Activated T-helper 1 cell treated with anti-CD3 and anti-CD28 coated beads, Interleukin-12 subunit alpha, Interleukin-12 subunit beta, Interleukin-2, Interleukin-4 antibody, amounts not matched to agents 30 ng/mL and 10 ng/mL and 1 ng/mL, durations not matched to agents 14 hours and 24 hours and 36 hours (primary cell): ENCODE measurements at regions of chr2 and their contacts with region 1.

Region 1: GRCh38 chr2:101473911-101474701 is 806 bp downstream of the RFX8 start:
- DNase-seq: peak; percentile 52
- H3K4me3 Mint-ChIP-seq: peak overlapping the region; percentile 84
- H3K27ac Mint-ChIP-seq: peak overlapping the region; percentile 86
- H3K4me1 Mint-ChIP-seq: peaks cover 62% of the 10 kb centered on the region
- H3K27me3 Mint-ChIP-seq: no peaks in the 10 kb centered on the region

Region 2: GRCh38 chr2:101012706-101013181 is 461.4 kb before region 1 on chr2:
- intact Hi-C with region 1: loop called (anchors 10 kb)
- DNase-seq: peak; percentile 19
- H3K4me3 Mint-ChIP-seq: no peak overlapping the region
- H3K27ac Mint-ChIP-seq: peak overlapping the region; percentile 41
- H3K4me1 Mint-ChIP-seq: peaks cover 36% of the 10 kb centered on the region
- H3K27me3 Mint-ChIP-seq: no peaks in the 10 kb centered on the region

Region 3: GRCh38 chr2:101501443-101501842 is 27.3 kb after region 1 on chr2:
- intact Hi-C with region 1: loop called (anchors 2 kb)
- DNase-seq: no peak
- H3K4me3 Mint-ChIP-seq: no peak overlapping the region
- H3K27ac Mint-ChIP-seq: peak overlapping the region; percentile 14
- H3K4me1 Mint-ChIP-seq: peaks cover 22% of the 10 kb centered on the region
- H3K27me3 Mint-ChIP-seq: no peaks in the 10 kb centered on the region

Region 4: GRCh38 chr2:101569886-101570520 is 95.9 kb after region 1 on chr2:
- intact Hi-C with region 1: loop called (anchors 2 kb)
- DNase-seq: no peak
- H3K4me3 Mint-ChIP-seq: no peak overlapping the region
- H3K27ac Mint-ChIP-seq: peak overlapping the region; percentile 91
- H3K4me1 Mint-ChIP-seq: peaks cover 47% of the 10 kb centered on the region
- H3K27me3 Mint-ChIP-seq: peaks cover 8% of the 10 kb centered on the region

Region 5: DNA sequence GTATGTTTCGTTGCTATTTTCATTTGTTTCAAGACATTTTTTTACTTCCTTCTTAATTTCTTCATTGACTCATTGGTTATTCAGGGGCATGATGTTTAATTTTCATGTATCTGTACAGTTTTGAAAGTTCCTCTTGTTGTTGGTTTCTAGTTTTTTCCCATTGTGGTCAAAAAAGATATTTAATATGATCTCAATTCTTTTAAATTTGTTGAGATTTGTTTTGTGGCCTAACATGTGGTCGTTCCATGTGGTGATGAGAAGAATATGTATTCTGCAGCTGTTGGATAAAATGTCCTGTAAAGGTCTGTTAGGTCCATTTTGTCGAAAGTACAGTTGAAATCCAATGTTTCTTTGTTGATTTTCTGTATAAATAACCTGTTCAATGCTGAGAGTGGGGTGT is 113.1 kb after region 1 on chr2:
- intact Hi-C with region 1: no loop called
- DNase-seq: no peak
- H3K4me3 Mint-ChIP-seq: no peak overlapping the region
- H3K27ac Mint-ChIP-seq: no peak overlapping the region
- H3K4me1 Mint-ChIP-seq: no peaks in the 10 kb centered on the region
- H3K27me3 Mint-ChIP-seq: peaks cover 7% of the 10 kb centered on the region

Region 6: GRCh38 chr2:101597351-101597944 is 123.3 kb after region 1 on chr2:
- intact Hi-C with region 1: no loop called
- DNase-seq: no peak
- H3K4me3 Mint-ChIP-seq: no peak overlapping the region
- H3K27ac Mint-ChIP-seq: no peak overlapping the region
- H3K4me1 Mint-ChIP-seq: peaks cover 6% of the 10 kb centered on the region
- H3K27me3 Mint-ChIP-seq: peaks cover 4% of the 10 kb centered on the region

Region 7: DNA sequence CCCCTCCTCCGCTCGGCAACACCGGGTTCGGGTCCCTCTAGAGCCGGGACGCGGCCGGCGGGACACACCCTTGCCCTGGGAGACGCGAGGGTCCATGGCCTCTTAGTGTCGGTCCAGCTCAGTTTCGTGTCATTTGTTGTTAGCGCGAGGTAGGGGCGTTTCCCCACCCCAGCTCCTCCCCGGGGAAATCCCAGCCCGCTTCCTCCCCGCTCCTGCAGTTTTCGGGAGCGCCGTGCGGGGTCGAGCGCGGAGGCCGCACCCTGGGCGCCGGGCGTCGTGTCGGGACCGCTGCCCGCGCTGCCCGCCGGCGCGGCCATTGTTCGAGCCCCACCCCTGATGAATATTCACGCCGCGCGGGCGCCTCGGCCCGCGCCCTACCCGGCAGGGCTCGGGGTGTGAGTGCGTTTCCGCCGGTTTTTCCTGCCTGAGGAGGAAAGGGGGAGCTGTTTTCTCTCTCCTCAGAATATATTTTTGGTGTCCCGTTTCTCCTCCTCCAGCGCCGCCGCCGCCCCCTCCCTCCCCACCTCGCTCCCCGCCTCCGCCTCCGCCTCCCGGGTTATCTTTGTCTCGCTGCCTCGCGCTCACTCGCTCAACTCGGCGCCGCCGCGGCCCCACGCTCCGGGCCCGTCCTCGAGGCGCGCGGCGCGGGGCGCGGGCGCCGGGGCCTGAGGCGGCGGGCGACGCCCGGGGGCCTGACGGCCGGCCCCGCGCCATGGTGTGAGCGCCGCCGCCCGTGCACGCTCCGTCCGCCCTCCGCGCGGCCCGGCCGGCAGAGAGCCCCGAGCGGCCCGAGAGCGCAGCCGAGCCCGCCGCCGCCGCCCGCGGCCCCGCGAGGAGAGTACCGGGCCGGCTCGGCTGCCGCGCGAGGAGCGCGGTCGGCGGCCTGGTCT is 223.3 kb after region 1 on chr2 and contains the start of gene MAP4K4:
- intact Hi-C with region 1: loop called (anchors 2 kb)
- DNase-seq: peak; percentile 69
- H3K4me3 Mint-ChIP-seq: peak within 1 kb of the TSS; percentile 88
- H3K27ac Mint-ChIP-seq: peak within 1 kb of the TSS; percentile 88
- H3K4me1 Mint-ChIP-seq: peaks cover 24% of the 10 kb centered on the region
- H3K27me3 Mint-ChIP-seq: no peaks in the 10 kb centered on the region
- total RNA-seq, gene MAP4K4: 54.3 and 54.5 TPM in 2 replicates

Region 8: DNA sequence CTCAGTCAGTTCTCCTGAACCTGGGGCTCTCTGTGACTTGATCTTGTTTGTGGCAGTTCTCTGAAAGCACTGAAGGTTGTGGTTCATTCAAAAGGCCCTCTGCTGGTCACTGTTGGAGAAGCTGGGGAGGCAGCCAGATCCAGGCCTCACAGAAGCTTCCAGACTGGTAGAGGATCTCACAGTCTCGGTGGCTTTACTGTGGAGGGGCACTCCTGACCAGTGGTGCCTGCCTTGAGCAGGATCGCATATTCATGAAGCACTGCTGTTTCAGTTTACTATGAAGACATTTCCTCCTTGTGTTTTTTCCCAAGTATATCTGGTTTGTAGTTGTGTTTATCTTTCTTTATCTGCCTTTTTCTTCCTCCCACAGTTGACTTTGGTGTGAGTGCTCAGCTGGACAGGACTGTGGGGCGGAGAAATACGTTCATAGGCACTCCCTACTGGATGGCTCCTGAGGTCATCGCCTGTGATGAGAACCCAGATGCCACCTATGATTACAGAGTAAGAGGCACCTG is 357.3 kb after region 1 on chr2:
- intact Hi-C with region 1: loop called (anchors 2 kb)
- DNase-seq: peak; percentile 46
- H3K4me3 Mint-ChIP-seq: peak overlapping the region; percentile 32
- H3K27ac Mint-ChIP-seq: peak overlapping the region; percentile 92
- H3K4me1 Mint-ChIP-seq: peaks cover 54% of the 10 kb centered on the region
- H3K27me3 Mint-ChIP-seq: no peaks in the 10 kb centered on the region

Region 9: GRCh38 chr2:101900375-101900774 is 426.3 kb after region 1 on chr2:
- intact Hi-C with region 1: no loop called
- DNase-seq: peak; percentile 9
- H3K4me3 Mint-ChIP-seq: peak overlapping the region; percentile 40
- H3K27ac Mint-ChIP-seq: no peak overlapping the region
- H3K4me1 Mint-ChIP-seq: peaks cover 11% of the 10 kb centered on the region
- H3K27me3 Mint-ChIP-seq: no peaks in the 10 kb centered on the region